ENCODE measurements at regions of chr16 and their contacts with region 1.

Region 1: GRCh38 chr16:70364399-70364798 is 17.7 kb downstream of the DDX19A start:
- DNase-seq: no peak
- ATAC-seq: no peak
- H3K4me3 ChIP-seq: no peak overlapping the region
- H3K27ac ChIP-seq: no peak overlapping the region
- H3K4me1 ChIP-seq: no peaks in the 10 kb centered on the region
- H3K27me3 ChIP-seq: no peaks in the 10 kb centered on the region

Region 2: DNA sequence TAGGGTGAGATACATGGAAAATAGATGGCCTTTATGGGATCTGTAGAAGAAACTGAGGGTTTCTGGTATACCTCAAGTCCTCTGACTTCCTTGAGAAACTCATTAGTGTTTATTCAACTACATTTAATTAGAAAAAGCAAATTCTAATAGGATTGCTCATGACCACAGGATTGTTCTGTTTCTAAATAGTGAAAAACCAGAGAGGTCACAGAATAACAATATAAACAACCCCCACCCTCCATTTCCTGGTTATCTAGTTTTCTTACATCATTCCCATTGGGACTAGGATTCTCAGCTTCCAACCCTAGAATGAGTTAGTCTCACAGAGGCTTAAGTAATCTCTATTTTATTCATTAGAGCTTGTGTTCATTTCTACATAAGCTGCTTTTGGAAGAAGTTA is 189.2 kb after region 1 on chr16:
- intact Hi-C with region 1: loop called in 1 of 2 experiments (anchors 10 kb)
- DNase-seq: no peak
- ATAC-seq: no peak
- H3K4me3 ChIP-seq: no peak overlapping the region
- H3K27ac ChIP-seq: no peak overlapping the region
- H3K4me1 ChIP-seq: no peaks in the 10 kb centered on the region
- H3K27me3 ChIP-seq: no peaks in the 10 kb centered on the region